ENCODE measurements at regions of chr1 and their contacts with region 1.

Region 1: GRCh38 chr1:163315773-163316374 is 5.9 kb upstream of the NUF2 start:
- DNase-seq: peak in 2 of 5 donors; percentile 13 to 30
- ATAC-seq: no peak
- H3K4me3 ChIP-seq: no peak overlapping the region
- H3K27ac ChIP-seq: no peak overlapping the region
- H3K4me1 ChIP-seq: peaks cover 0 to 11% (median 5%) of the 10 kb centered on the region in 12 donors
- H3K27me3 ChIP-seq: no peaks in the 10 kb centered on the region
- CTCF ChIP-seq: peak; percentile 53 to 84 (median 72)
- POLR2A ChIP-seq: no peak

Region 2: DNA sequence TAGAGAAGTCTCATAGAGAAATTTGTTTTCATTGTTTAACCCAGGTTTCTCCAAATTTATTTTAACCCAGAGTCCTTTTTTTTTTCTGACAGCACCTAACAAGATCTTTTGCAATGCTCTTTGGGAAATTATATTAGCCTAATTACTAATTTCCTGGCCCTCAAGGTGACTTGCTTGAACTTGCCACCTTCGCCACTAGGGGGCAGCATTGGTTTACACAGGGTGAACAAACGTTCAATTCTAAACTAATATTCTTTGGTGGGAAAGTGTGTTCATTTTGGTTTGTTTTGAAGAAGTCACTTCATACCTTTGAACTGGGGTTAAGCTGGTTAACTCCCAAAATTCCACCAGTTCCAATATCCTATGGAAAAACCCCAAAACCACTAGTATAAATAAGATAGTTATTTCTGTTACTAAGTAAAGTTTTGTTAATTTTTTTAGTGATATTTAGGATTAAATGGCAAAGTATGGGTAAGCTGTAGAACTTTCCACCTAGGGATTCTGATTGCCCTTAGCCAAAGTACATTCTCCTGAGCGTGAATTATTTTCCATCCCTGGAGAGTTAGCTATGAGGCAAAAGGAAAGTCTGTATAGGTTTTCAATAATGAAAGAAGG is 467.9 kb before region 1 on chr1:
- intact Hi-C with region 1: loop called in 9 of 10 experiments (anchors 2 to 5 kb)
- DNase-seq: peak; percentile 69 to 80 (median 70)
- ATAC-seq: peak in 1 of 4 donors; percentile 45
- H3K4me3 ChIP-seq: no peak overlapping the region
- H3K27ac ChIP-seq: no peak overlapping the region
- H3K4me1 ChIP-seq: no peaks in the 10 kb centered on the region
- H3K27me3 ChIP-seq: no peaks in the 10 kb centered on the region
- CTCF ChIP-seq: peak; percentile 88 to 96 (median 94)
- POLR2A ChIP-seq: no peak

Region 3: GRCh38 chr1:162878000-162878596 is 437.8 kb before region 1 on chr1:
- intact Hi-C with region 1: loop called in 8 of 10 experiments (anchors 1 to 5 kb)
- DNase-seq: peak in 4 of 5 donors; percentile 33 to 57 (median 46)
- ATAC-seq: peak in 3 of 4 donors; percentile 69 to 78 (median 70)
- H3K4me3 ChIP-seq: no peak overlapping the region
- H3K27ac ChIP-seq: no peak overlapping the region
- H3K4me1 ChIP-seq: no peaks in the 10 kb centered on the region
- H3K27me3 ChIP-seq: peaks cover 0 to 6% (median 0%) of the 10 kb centered on the region in 9 donors
- CTCF ChIP-seq: peak; percentile 54 to 78 (median 70)
- POLR2A ChIP-seq: no peak

Region 4: DNA sequence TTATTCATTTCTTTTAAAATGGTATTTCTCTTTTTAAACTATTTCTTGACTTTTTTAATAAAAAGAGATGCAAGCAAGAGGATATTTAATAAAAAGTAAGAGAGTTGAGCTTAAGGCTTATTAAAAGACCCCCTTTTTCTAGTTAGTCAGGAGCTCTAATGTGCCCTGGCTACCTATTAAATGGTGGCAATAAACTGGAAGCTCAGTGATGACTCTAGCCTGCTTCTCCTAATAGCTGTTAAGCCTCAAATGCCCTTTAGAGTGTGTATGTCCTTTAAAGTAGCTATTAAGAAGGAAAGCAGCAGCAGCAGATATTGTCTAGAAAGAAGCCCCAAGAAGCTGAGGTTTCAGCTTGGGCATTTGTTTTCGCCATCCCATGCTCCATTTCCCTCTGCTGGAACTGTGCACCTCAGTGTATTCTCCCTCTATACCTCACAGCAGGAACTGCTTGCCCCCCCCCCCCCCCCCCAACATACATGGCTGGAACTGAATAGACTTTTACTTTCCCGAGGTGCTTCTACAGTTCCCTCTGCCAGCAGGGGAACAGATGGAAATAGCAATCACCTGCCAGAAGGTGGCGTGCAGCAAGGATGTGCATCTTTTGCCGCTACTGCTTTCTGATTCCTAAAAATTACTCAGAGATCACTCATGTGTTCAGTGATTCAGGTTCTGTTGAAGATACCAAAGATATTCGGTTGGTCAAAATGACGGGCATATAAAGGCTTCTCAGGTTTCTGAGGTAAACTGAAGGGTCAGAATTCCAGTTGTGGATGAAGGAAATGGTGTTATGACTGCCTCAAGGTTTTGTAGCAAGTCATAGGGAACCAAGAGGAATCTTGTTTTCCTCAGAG is 244.2 kb before region 1 on chr1:
- intact Hi-C with region 1: loop called (anchors 2 to 5 kb)
- DNase-seq: peak in 4 of 5 donors; percentile 41 to 64 (median 62)
- ATAC-seq: peak in 3 of 4 donors; percentile 32 to 76 (median 61)
- H3K4me3 ChIP-seq: peak overlapping the region in 7 of 12 donors; percentile 23 to 65 (median 53)
- H3K27ac ChIP-seq: peak overlapping the region in 4 of 12 donors; percentile 18 to 62 (median 46)
- H3K4me1 ChIP-seq: peaks cover 0 to 5% (median 0%) of the 10 kb centered on the region in 12 donors
- H3K27me3 ChIP-seq: peaks cover 0 to 18% (median 0%) of the 10 kb centered on the region in 9 donors
- CTCF ChIP-seq: peak; percentile 34 to 74 (median 59)
- POLR2A ChIP-seq: no peak

Region 5: GRCh38 chr1:163174524-163175437 is 141.1 kb before region 1 on chr1:
- intact Hi-C with region 1: loop called in 9 of 10 experiments (anchors 2 to 10 kb)
- DNase-seq: peak; percentile 61 to 75 (median 64)
- ATAC-seq: peak in 3 of 4 donors; percentile 72 to 84 (median 75)
- H3K4me3 ChIP-seq: peak overlapping the region in 6 of 12 donors; percentile 4 to 42 (median 27)
- H3K27ac ChIP-seq: peak overlapping the region in 8 of 12 donors; percentile 9 to 74 (median 58)
- H3K4me1 ChIP-seq: peaks cover 0 to 35% (median 6%) of the 10 kb centered on the region in 12 donors
- H3K27me3 ChIP-seq: no peaks in the 10 kb centered on the region
- CTCF ChIP-seq: peak; percentile 72 to 93 (median 86)
- POLR2A ChIP-seq: no peak

Measured in heart left ventricle (tissue), 16 donors.